ENCODE measurements at regions of chr7 and their contacts with region 1.

Region 1: DNA sequence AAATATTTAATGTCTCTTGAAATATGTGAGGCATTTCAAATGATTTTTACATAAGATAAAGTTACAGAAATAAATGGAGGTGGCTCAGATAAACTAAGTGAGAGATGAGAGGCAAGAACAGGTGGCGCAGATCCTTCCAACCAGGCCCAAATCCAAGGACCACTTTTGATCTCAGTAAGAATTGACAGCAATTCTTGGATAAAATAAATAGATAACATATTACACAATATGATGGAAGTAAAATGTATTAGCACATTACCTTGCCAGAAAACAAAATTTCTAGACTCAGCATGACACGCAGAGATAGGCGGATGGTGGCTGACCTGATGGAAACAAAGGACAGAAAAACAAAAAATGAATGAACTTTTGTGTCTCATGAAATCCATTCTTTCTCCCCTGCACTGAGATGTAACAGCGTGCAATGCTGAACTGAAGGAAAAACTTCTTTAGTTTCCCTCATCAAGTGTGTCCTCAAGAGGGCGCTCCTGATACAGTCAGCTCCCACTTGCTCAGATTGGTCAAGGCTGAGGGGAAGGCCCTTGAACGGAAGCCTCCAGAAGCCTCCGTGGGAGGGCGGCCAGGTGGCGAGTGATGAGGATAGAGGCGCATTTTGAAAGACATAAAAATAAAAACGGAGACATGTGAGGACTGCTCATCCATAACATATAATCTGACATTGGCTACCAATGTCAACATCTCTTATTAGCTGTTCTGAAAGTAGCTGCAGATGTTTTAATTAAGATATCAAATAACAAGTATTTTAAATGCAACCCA is 62.8 kb upstream of the GSDME start:
- DNase-seq: peak; percentile 88 to 93 (median 90)
- ATAC-seq: peak; percentile 93
- H3K4me3 ChIP-seq: no peak overlapping the region
- H3K27ac ChIP-seq: peak overlapping the region in 2 of 4 donors; percentile 41 to 64
- H3K4me1 ChIP-seq: peaks cover 15% of the 10 kb centered on the region
- H3K27me3 ChIP-seq: no peaks in the 10 kb centered on the region
- CTCF ChIP-seq: peak; percentile 69 to 95 (median 88)
- POLR2A ChIP-seq: no peak

Region 2: DNA sequence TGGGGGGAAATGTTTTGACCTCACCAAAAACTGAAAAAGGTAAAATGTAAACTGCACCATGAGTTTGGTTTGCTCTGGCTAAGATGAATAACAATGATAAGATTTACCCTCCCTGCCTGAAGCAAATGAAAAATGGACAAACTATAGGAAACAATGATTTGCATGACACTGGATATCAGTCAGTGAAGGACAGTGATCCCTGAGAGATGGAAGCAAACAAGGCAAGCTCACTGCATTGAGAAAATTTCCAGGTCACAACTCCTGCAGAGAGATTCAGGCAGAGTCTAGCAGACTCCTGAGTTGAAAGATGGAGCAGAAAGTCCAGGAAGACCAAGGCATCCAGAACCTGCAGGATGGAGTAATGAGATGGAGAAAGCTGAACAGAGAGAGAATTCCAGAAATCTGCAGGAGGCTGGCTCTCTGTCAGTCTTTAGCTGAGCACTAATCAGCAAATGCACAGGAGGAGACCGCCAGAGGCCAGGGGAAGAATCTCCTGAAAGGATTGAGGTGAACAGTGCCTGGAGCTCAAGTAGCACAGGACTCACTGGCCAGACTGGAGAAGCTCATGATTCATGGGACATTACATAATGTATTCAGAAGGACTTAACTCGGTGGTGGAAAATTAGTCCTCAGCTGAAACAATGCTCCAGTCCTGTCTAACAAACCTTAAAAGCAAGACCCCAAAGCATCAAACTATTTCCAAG is 298.0 kb before region 1 on chr7:
- intact Hi-C with region 1: no loop called
- DNase-seq: no peak
- ATAC-seq: no peak
- H3K4me3 ChIP-seq: no peak overlapping the region
- H3K27ac ChIP-seq: no peak overlapping the region
- H3K4me1 ChIP-seq: no peaks in the 10 kb centered on the region
- H3K27me3 ChIP-seq: no peaks in the 10 kb centered on the region
- CTCF ChIP-seq: no peak
- POLR2A ChIP-seq: no peak

Region 3: DNA sequence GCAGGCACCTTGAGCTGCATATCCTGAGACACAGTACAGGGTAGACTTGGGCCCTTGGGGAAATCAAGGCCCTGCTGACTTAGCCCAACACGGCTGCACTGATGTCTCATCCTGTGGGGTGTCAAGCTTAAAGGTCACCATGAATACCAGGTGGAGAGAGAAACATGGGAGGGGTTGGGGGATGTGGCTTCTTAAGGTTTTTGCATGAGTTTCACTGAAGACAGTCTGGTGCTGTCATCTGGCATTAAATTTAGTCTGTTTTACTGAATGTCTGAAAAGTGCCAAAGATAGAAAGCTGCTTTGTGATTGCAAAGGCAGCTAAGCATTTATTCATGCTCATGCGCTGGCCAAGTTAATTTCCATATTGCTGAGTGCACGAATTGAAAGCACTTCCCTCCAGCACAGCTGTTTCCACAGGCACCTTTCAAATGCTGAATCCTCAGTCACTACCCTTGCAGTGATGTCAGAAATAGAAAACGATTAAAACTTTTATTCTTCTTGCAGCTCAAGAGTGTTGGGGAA is 57.7 kb after region 1 on chr7:
- intact Hi-C with region 1: no loop called
- DNase-seq: peak in 1 of 4 donors; percentile 22
- ATAC-seq: no peak
- H3K4me3 ChIP-seq: no peak overlapping the region
- H3K27ac ChIP-seq: no peak overlapping the region
- H3K4me1 ChIP-seq: peaks cover 7% of the 10 kb centered on the region
- H3K27me3 ChIP-seq: no peaks in the 10 kb centered on the region
- CTCF ChIP-seq: no peak
- POLR2A ChIP-seq: no peak

Region 4: GRCh38 chr7:25069900-25070443 is 249.9 kb after region 1 on chr7:
- intact Hi-C with region 1: loop called (anchors 5 kb)
- DNase-seq: peak; percentile 55 to 69 (median 60)
- ATAC-seq: peak; percentile 85
- H3K4me3 ChIP-seq: no peak overlapping the region
- H3K27ac ChIP-seq: no peak overlapping the region
- H3K4me1 ChIP-seq: peaks cover 5% of the 10 kb centered on the region
- H3K27me3 ChIP-seq: no peaks in the 10 kb centered on the region
- CTCF ChIP-seq: peak; percentile 81 to 96 (median 90)
- POLR2A ChIP-seq: no peak

Measured in body of pancreas (tissue), 4 donors.